Activated CD8-positive, alpha-beta T cell treated with anti-CD3 and anti-CD28 coated beads for 36 hours (primary cell): ENCODE measurements at regions of chr14 and their contacts with region 1.

Region 1: DNA sequence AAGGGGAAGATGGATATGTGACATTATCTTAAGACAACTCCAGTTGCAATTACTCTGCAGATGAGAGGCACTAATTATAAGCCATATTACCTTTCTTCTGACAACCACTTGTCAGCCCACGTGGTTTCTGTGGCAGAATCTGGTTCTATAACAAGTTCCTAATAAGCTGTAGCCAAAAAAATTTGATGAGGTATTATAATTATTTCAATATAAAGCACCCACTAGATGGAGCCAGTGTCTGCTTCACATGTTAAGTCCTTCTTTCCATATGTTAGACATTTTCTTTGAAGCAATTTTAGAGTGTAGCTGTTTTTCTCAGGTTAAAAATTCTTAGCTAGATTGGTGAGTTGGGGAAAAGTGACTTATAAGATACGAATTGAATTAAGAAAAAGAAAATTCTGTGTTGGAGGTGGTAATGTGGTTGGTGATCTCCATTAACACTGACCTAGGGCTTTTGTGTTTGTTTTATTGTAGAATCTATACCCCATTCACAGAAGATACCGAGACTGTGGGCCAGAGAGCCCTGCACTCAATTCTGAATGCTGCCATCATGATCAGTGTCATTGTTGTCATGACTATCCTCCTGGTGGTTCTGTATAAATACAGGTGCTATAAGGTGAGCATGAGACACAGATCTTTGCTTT is 36.9 kb downstream of the PSEN1 start:
- DNase-seq: peak; percentile 27
- ATAC-seq: peak; percentile 27
- H3K4me3 Mint-ChIP-seq: no peak overlapping the region
- H3K27ac Mint-ChIP-seq: no peak overlapping the region
- H3K4me1 Mint-ChIP-seq: peaks cover 6% of the 10 kb centered on the region
- H3K27me3 Mint-ChIP-seq: no peaks in the 10 kb centered on the region
- CTCF ChIP-seq: peak; percentile 66

Region 2: DNA sequence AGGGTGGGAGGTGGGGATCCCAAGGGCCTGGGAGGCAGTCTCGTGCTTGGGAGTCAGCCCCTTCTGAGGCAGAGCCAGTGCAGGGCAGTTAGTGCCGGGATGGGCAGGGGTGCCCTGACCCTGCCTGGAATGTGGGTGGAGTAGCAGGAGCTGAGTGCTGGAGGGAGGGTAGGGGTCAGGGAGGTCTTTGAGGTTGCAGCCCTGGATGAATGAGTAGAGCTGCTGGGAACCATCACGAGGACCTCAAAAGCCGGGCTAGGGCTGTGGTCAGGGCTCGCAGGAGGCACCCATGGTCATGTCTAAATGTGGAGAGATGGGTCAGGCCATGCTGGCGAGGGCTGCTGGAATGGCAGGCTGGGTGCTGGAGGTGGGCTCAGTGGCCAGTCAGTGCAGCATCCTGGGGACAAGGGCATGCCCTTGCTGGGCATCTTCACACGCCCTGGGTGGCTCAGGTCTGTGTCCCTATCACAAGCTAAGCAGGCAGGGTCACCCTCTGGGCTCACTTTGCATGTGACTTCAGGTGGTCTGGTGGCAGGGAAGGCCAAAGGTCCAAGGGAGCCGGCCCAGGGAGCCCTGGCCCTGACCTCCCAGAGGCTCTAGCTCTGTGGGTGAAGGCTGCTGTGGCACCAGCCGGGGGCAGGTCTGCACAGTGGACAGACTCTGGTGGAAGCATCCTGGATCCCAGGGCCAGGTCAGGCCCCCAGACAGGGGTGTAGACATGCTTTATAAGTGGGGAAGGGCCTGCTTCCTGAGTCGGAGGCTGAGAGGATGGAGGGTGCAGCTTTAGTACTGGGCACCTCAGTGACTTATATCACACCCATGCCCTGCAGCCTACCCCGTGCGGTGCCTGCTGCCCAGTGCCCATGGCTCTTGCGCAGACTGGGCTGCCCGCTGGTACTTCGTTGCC is 88.6 kb after region 1 on chr14:
- CTCF ChIA-PET with region 1: no interaction called
- POLR2A ChIA-PET with region 1: no interaction called
- intact Hi-C with region 1: no loop called
- DNase-seq: no peak
- ATAC-seq: no peak
- H3K4me3 Mint-ChIP-seq: no peak overlapping the region
- H3K27ac Mint-ChIP-seq: no peak overlapping the region
- H3K4me1 Mint-ChIP-seq: peaks cover 5% of the 10 kb centered on the region
- H3K27me3 Mint-ChIP-seq: peaks cover 2% of the 10 kb centered on the region
- CTCF ChIP-seq: no peak

Region 3: DNA sequence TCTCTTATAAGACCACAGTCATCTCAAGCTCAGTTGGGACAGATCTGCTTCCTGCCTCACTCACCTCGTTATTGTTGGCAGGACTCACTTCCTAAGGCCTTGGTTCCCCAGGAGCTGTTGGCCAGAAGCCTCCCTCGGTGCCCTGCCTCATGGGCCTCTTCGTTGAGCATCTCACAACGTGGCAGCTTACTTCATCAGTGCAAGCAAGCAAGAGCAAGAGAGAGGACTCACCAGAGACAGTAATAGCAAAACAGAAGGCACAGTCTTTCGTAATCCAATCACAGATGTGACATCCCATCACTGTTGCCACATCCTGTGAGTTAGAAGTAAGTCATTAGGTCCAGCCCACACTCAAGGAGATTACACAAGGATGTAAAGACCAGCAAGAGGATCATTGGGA is 290.2 kb after region 1 on chr14:
- CTCF ChIA-PET with region 1: interaction called, 14 read pairs
- POLR2A ChIA-PET with region 1: no interaction called
- intact Hi-C with region 1: no loop called
- DNase-seq: peak; percentile 66
- ATAC-seq: peak; percentile 46
- H3K4me3 Mint-ChIP-seq: peak overlapping the region; percentile 35
- H3K27ac Mint-ChIP-seq: peak overlapping the region; percentile 87
- H3K4me1 Mint-ChIP-seq: peaks cover 60% of the 10 kb centered on the region
- H3K27me3 Mint-ChIP-seq: no peaks in the 10 kb centered on the region
- CTCF ChIP-seq: no peak